Posterior vena cava (tissue), 2 donors: ENCODE measurements at regions of chr11 and their contacts with region 1.

Region 1: GRCh38 chr11:68006606-68007400 is 2.9 kb upstream of the UNC93B1 start:
- DNase-seq: no peak

Region 2: GRCh38 chr11:68020575-68020974 is 13.8 kb after region 1 on chr11:
- intact Hi-C with region 1: no loop called
- DNase-seq: no peak

Region 3: GRCh38 chr11:68043349-68044144 is 36.7 kb after region 1 on chr11:
- intact Hi-C with region 1: loop called in 1 of 2 experiments (anchors 1 kb)
- DNase-seq: no peak

Region 4: GRCh38 chr11:68430801-68431200 is 424.0 kb after region 1 on chr11:
- intact Hi-C with region 1: no loop called
- DNase-seq: no peak